Transverse colon (tissue), 4 donors: ENCODE measurements at regions of chr6 and their contacts with region 1.

Region 1: DNA sequence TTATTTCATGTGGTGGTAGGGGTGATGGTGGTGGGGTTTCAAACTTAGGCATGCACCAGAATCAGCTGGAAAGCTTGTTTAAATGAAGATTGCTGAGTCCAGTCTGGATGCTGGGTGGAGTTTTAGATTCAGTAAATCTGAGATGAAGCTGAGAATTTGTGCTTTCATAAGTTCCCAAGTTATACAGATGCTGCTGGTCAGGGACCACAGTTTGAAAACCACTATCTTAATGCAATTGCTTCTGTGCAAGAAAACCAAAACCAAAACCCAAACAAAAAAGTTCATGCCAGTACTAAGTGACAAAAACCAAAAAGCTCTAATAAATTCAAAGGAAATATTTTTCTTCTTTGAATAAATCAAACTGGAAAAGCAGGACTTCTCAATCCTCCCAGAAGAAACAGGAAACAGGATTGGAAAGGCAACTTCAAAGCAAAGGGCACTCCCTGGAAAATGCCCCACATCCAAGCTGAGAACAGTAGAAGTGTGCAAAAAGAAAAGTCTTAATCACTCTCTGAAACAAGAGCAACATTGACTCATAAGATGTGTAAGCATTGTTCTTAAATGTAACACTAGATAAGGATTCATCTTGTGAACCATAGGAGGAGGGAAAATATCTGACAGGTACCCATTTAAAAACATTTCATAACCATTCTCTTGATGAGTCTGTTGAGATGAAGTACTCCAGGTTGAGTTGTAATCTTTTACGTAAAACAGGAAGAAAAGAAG is 481.5 kb upstream of the HSF2 start:
- DNase-seq: no peak
- H3K4me3 ChIP-seq: no peak overlapping the region
- H3K27ac ChIP-seq: no peak overlapping the region
- H3K4me1 ChIP-seq: no peaks in the 10 kb centered on the region
- H3K27me3 ChIP-seq: no peaks in the 10 kb centered on the region
- CTCF ChIP-seq: no peak
- EP300 ChIP-seq: no peak
- POLR2A ChIP-seq: no peak

Region 2: GRCh38 chr6:121944354-121944753 is 26.4 kb after region 1 on chr6:
- in situ Hi-C with region 1: no loop called
- intact Hi-C with region 1: no loop called
- DNase-seq: no peak
- H3K4me3 ChIP-seq: no peak overlapping the region
- H3K27ac ChIP-seq: no peak overlapping the region
- H3K4me1 ChIP-seq: no peaks in the 10 kb centered on the region
- H3K27me3 ChIP-seq: no peaks in the 10 kb centered on the region
- CTCF ChIP-seq: no peak
- EP300 ChIP-seq: no peak
- POLR2A ChIP-seq: no peak

Region 3: GRCh38 chr6:121956782-121957181 is 38.8 kb after region 1 on chr6:
- in situ Hi-C with region 1: no loop called
- intact Hi-C with region 1: loop called (anchors 1 kb)
- DNase-seq: no peak
- H3K4me3 ChIP-seq: no peak overlapping the region
- H3K27ac ChIP-seq: no peak overlapping the region
- H3K4me1 ChIP-seq: no peaks in the 10 kb centered on the region
- H3K27me3 ChIP-seq: no peaks in the 10 kb centered on the region
- CTCF ChIP-seq: no peak
- EP300 ChIP-seq: no peak
- POLR2A ChIP-seq: no peak